OCI-LY7 (cell line): ENCODE measurements at regions of chr5 and their contacts with region 1.

Region 1: GRCh38 chr5:163505368-163506094 is at the start of gene MAT2B:
- DNase-seq: peak; percentile 96
- H3K4me3 ChIP-seq: peak within 1 kb of the TSS; percentile 78
- H3K27ac ChIP-seq: peak within 1 kb of the TSS; percentile 75
- H3K4me1 ChIP-seq: peaks cover 45% of the 10 kb centered on the region
- CTCF ChIP-seq: peak; percentile 81
- total RNA-seq, gene MAT2B: 32.3 and 35.0 TPM in 2 replicates

Region 2: GRCh38 chr5:163437309-163438182 is 68.0 kb before region 1 on chr5 and contains the start of gene CCNG1:
- CTCF ChIA-PET with region 1: no interaction called
- POLR2A ChIA-PET with region 1: interaction called, 5 read pairs
- intact Hi-C with region 1: loop called (anchors 1 kb)
- DNase-seq: peak; percentile 97
- H3K4me3 ChIP-seq: peak within 1 kb of the TSS; percentile 85
- H3K27ac ChIP-seq: peak within 1 kb of the TSS; percentile 24
- H3K4me1 ChIP-seq: peaks cover 19% of the 10 kb centered on the region
- CTCF ChIP-seq: no peak
- total RNA-seq, gene CCNG1: 83.0 and 93.5 TPM in 2 replicates

Region 3: DNA sequence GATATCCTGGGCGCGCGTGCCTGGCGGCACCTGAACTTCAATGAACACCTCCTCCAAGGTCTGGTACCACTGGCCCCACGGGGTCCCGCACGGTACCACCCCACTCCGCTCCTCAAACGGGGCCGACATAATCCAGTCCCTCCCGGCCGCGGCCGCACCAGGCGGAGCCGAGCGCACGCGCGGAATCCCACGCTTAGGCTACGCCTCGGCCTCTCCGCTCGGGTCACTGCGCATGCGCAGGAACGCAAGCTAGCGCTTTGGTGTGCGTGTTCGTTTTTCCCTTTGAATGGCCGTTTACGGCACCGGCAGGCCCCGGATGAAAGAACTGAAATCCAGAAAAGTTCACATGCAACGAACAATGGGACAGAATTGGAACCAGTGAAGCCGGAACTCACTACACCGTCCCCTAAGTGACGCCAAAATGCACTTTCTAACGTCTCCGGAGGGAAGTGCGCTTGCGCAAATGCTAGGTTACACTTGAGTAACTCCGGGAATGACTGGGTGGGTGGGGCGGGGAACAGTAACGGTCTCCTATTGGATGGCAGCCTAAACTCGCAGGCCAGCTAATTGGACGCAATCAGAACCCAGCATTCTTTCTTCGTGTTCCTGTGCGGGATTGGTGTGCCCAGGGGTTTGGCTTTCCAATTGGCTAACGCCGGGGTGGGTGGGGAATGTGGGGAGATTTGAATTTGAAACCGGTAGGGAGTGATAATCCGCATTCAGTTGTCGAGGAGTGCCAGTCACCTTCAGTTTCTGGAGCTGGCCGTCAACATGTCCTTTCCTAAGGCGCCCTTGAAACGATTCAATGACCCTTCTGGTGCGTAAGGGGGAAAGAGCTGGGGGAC is 45.4 kb before region 1 on chr5 and contains the starts of genes HMMR and NUDCD2:
- CTCF ChIA-PET with region 1: interaction called, 3 read pairs
- POLR2A ChIA-PET with region 1: interaction called, 72 read pairs
- intact Hi-C with region 1: loop called (anchors 1 kb)
- DNase-seq: peak; percentile 98
- H3K4me3 ChIP-seq: peak within 1 kb of the TSS; percentile 90
- H3K27ac ChIP-seq: peak within 1 kb of the TSS; percentile 92
- H3K4me1 ChIP-seq: peaks cover 43% of the 10 kb centered on the region
- CTCF ChIP-seq: no peak; the same call in 1 of the 2 replicates
- total RNA-seq, gene HMMR: 44.1 and 63.2 TPM in 2 replicates
- total RNA-seq, gene NUDCD2: 30.0 and 59.0 TPM in 2 replicates

Region 4: GRCh38 chr5:163489055-163489744 is 16.3 kb before region 1 on chr5:
- CTCF ChIA-PET with region 1: no interaction called
- POLR2A ChIA-PET with region 1: interaction called, 10 read pairs
- intact Hi-C with region 1: no loop called
- DNase-seq: no peak
- H3K4me3 ChIP-seq: no peak overlapping the region
- H3K27ac ChIP-seq: no peak overlapping the region
- H3K4me1 ChIP-seq: no peaks in the 10 kb centered on the region
- CTCF ChIP-seq: peak; percentile 42

Region 5: DNA sequence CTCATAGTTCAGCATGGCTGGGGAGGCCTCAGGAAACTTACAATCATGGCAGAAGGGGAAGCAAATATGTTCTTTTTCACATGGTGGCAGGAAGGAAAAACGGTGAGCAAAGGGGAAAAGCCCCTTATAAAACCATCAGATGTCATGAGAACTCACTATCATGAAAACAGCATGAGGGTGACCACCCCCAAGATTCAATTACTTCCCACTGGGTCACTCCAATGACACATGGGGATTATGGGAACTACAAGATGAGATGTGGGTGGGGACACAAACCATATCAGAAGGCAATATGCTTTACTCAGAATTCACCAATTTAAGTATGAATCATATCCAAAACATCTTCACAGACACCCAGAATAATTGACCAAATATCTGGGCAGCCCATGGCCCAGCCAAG is 19.6 kb after region 1 on chr5:
- CTCF ChIA-PET with region 1: no interaction called
- POLR2A ChIA-PET with region 1: interaction called, 10 read pairs
- intact Hi-C with region 1: no loop called
- DNase-seq: no peak
- H3K4me3 ChIP-seq: no peak overlapping the region
- H3K27ac ChIP-seq: no peak overlapping the region
- H3K4me1 ChIP-seq: no peaks in the 10 kb centered on the region
- CTCF ChIP-seq: no peak

Region 6: GRCh38 chr5:163915481-163915961 is 410.0 kb after region 1 on chr5:
- CTCF ChIA-PET with region 1: no interaction called
- POLR2A ChIA-PET with region 1: no interaction called
- intact Hi-C with region 1: loop called (anchors 5 kb)
- DNase-seq: peak; percentile 93
- H3K4me3 ChIP-seq: peak overlapping the region; percentile 61
- H3K27ac ChIP-seq: peak overlapping the region; percentile 99
- H3K4me1 ChIP-seq: peaks cover 58% of the 10 kb centered on the region
- CTCF ChIP-seq: no peak